ENCODE measurements at regions of chr20 and their contacts with region 1.

Region 1: DNA sequence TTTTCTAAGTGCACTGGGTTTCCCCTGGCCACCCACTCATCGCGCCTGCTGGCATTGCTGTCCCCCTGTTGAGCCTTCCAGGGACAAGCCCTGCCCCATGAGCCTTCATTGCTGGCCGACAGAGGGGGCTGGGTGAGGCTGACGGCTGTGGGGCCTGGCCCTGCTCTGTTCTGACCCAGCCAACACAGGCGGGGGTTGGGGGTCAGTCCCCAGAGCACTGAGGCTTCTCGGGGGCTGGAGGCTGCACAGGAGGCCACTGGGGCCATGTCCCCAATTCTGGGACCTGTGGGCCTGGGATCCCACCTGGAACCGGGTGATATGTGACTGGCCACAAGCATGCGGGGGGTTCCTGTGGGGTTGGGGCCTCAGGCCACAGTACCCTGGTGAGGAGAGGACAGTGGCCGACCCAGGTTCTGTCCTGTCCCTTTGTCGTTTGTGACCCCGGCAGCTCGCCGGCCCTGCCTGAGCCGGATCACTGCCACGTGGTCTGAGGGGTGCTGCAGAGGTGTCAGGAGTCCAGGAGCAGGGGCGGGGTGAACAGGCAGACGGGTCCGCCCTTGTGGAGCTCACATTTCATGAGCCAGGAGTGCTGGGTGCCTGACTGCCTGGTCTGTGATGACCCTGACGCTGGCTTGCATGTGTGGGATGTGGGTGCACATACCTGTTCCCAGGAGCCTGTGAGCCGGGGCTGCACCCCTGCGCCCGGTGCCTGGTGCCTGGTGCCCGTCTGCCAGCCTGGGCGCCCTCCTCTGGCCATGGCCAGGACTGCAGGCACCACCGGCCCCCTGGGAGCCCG is 2.1 kb upstream of the COL20A1 start:
- DNase-seq: peak; percentile 68 to 87 (median 83)
- ATAC-seq: peak; percentile 87
- H3K4me3 ChIP-seq: no peak overlapping the region
- H3K27ac ChIP-seq: 0 out of 3 replicates have a peak overlapping the region, but pooled peaks have one; percentile 2
- H3K4me1 ChIP-seq: peaks cover 0 to 70% of the 10 kb centered on the region in 2 experiments; a peak in 2 of 5 replicates
- H3K27me3 ChIP-seq: peaks cover 7 to 15% of the 10 kb centered on the region in 2 experiments; a peak in 4 of 5 replicates
- CTCF ChIP-seq: peak; percentile 64 to 83 (median 79)
- EP300 ChIP-seq: no peak
- POLR2A ChIP-seq: no peak
- RAD21 ChIP-seq: peak in 1 of 2 experiments; percentile 50; a peak in 3 of 4 replicates

Region 2: GRCh38 chr20:63223221-63224207 is 67.4 kb before region 1 on chr20:
- CTCF ChIA-PET with region 1: no interaction called
- POLR2A ChIA-PET with region 1: interaction called, 5 read pairs
- in situ Hi-C with region 1: no loop called
- intact Hi-C with region 1: loop called (anchors 5 kb)
- DNase-seq: peak; percentile 49 to 70 (median 58)
- ATAC-seq: peak; percentile 83
- H3K4me3 ChIP-seq: no peak overlapping the region
- H3K27ac ChIP-seq: no peak overlapping the region
- H3K4me1 ChIP-seq: peaks cover 0 to 24% of the 10 kb centered on the region in 2 experiments; a peak in 2 of 5 replicates
- H3K27me3 ChIP-seq: peaks cover 2 to 42% of the 10 kb centered on the region in 2 experiments
- CTCF ChIP-seq: peak; percentile 79 to 88 (median 79)
- EP300 ChIP-seq: no peak
- POLR2A ChIP-seq: no peak
- RAD21 ChIP-seq: peak; percentile 40 to 86

Region 3: DNA sequence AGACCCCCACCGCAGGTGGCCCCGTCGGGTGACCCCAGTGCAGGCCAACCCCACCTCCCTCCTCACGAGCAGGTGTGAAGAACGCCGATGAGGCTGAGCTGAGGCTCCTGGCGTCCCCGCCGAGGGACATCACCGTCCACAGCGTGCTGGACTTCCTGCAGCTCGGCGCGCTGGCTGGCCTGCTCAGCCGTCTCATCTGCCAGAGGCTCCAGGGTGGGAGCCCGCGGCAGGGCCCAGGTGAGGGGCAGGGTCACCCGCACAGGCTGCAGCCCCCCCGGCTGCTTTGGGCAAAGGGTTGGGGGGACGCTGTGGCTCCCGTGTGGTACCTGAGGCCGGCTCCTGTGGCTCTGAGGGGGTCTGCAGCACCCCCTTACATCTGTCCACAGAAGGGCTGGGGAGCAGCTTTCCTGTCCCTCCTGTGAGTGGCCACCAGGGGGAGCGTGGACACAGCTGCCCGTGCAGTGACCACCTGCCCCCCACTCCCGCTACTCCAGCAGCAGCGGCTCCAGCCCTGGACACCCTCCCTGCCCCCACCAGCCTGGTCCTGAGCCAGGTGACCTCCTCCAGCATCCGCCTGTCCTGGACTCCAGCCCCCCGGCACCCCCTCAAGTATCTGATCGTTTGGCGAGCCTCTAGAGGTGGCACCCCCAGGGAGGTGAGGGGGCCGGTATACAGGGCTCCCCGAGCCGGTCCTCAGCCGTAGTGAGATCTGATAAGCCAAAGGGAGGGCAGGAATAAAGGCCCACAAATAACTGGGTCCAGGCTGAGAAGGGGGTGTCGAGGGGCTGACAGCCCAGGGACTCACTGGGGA is 18.6 kb after region 1 on chr20:
- CTCF ChIA-PET with region 1: no interaction called
- POLR2A ChIA-PET with region 1: no interaction called
- in situ Hi-C with region 1: no loop called
- intact Hi-C with region 1: no loop called
- DNase-seq: peak; percentile 59 to 77 (median 70)
- ATAC-seq: peak; percentile 92
- H3K4me3 ChIP-seq: no peak overlapping the region
- H3K27ac ChIP-seq: no peak overlapping the region
- H3K4me1 ChIP-seq: peaks cover 0 to 59% of the 10 kb centered on the region in 2 experiments; a peak in 2 of 5 replicates
- H3K27me3 ChIP-seq: peaks cover 0 to 60% of the 10 kb centered on the region in 2 experiments; a peak in 2 of 5 replicates
- CTCF ChIP-seq: peak; percentile 73 to 84 (median 78)
- EP300 ChIP-seq: no peak
- POLR2A ChIP-seq: no peak
- RAD21 ChIP-seq: peak in 1 of 2 experiments; percentile 78; a peak in 3 of 4 replicates